ENCODE measurements at regions of chr22 and their contacts with region 1.

Region 1: DNA sequence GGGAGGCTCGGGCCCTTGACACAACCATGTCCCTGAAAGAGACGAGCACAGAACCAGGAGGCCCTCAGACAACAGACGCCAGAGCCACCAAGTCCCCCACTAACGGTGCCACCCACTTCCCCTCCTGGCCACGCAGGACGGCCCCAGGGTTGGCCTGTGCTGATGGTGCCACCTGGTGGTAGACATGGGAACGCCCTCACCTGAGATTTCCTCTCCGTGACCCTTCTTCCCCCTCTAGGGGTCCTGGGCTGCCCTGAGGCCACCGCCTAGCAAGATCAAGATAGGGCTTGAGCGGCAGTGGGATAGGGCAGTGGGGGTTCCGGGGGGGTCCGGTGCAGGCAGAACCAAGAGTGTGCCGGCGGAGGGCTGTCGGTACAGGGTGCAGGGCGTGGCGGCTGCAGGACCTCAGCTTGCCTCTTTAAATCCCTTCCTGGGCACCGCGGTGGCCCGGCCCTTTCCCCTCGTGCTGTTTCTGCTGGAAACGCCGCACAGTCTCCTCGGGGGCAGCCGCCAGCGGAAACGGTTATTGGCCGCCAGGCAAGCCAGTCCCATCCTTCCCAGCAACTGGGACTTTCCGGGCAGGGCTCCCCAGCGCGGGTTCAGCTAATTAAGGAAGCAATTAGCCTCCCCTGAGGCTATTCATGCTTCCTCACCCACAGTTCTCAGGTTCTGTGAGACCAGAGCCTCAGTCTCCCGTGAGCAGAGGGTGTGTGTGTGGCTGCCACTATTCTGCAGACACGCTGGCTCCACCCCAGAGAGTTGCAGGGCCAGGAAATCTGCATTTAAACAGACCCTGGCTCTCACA is 5.5 kb upstream of the NFAM1 start:
- DNase-seq: peak; percentile 58 to 73
- H3K4me3 ChIP-seq: peak overlapping the region; percentile 33 to 73 (median 50)
- H3K27ac ChIP-seq: peak overlapping the region; percentile 40 to 41
- H3K4me1 ChIP-seq: peaks cover 10 to 16% of the 10 kb centered on the region in 2 donors
- H3K27me3 ChIP-seq: no peaks in the 10 kb centered on the region
- CTCF ChIP-seq: peak; percentile 97 to 99 (median 99)
- POLR2A ChIP-seq: no peak

Region 2: DNA sequence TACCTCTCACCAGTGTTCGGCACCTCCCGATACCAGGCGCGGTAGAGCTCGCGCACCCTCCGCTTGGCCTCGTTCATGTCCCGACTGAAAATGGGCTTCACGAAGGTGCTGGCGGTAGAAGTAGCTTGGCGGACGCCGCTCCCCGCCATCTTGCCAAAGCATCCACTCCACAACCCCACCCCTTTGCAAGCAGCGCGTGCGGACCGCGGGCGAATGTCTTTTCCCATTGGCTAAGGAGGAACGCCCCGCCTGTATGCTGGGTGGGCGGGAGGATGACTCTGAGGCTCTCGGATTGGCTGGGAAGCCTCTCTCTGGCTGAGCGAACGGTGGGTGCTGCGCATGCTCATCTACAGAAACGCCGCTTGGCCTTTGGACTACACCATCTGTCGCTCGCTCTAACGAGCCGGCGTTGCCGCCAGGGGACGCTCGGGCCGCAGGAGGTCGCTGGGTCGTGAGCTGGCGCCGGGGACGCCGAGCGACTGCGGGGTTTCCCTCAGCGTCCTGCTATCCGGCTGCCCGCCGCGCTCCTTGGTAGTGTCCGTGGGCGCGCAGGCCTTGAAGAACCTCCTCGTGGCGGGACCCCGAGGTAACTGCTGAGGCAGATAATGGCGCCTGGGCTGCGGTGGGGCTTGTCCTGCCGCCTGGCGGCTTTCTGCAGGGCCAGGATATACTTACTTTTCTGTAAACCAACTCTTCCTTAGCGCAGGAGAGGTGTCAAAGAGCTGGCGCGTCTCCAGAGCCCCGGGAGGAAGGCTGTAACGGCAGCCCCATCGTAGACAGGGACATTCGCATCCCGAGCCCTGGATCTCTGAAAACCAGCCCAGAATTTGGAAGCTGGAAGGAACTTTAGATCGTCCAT is 346.9 kb before region 1 on chr22 and contains the start of gene NDUFA6:
- intact Hi-C with region 1: loop called (anchors 2 kb)
- DNase-seq: peak; percentile 98 to 99
- H3K4me3 ChIP-seq: peak within 1 kb of the TSS; percentile 70 to 95 (median 73)
- H3K27ac ChIP-seq: peak within 1 kb of the TSS; percentile 96 to 97
- H3K4me1 ChIP-seq: no peaks in the 10 kb centered on the region
- H3K27me3 ChIP-seq: no peaks in the 10 kb centered on the region
- CTCF ChIP-seq: peak; percentile 87 to 99 (median 95)
- POLR2A ChIP-seq: peak; percentile 75
- total RNA-seq, gene NDUFA6: 37.3 to 61.1 (median 45.2) TPM

Region 3: GRCh38 chr22:42169055-42169469 is 268.6 kb before region 1 on chr22:
- intact Hi-C with region 1: loop called (anchors 10 kb)
- DNase-seq: peak in 1 of 2 donors; percentile 43
- H3K4me3 ChIP-seq: no peak overlapping the region
- H3K27ac ChIP-seq: no peak overlapping the region
- H3K4me1 ChIP-seq: peaks cover 0 to 8% of the 10 kb centered on the region in 2 donors
- H3K27me3 ChIP-seq: no peaks in the 10 kb centered on the region
- CTCF ChIP-seq: peak; percentile 23 to 87 (median 82)
- POLR2A ChIP-seq: no peak

Region 4: DNA sequence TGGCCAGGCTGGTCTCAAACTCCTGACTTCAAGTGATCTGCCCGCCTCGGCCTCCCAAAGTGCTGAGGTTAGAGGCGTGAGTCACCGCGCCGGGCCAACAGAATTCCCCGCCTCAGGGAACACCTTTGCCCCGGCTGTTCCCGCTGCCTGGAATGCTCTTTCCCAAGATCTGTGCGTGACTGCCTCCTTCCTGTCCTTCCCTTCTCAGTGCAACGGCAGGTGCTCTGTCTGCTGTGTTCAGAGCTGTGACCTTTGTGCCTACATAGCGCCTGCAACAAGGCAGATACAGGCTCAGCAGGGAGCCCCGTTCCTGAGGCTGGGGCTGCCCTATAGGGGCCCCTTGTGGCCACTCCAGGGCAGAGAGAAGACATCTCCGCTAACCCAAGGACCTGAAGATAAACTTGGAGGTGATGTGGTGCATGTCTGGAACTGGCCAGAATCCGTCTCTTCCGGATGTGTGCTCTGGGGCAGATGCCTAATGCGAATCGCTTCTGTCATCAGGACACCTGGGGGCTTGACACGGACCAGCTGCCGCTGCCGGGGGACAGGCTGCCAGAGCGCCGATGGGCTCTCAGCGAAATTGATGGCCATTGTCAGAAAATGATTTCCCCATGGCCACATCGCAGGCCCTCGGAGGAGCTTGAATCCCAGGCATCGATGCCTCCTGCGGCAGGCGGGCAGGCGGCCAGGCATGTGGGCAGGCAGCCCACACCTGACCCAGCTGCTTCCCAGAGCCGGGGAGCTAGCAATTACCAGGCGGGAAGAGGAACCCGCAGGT is 123.7 kb before region 1 on chr22:
- intact Hi-C with region 1: no loop called
- DNase-seq: peak; percentile 63 to 65
- H3K4me3 ChIP-seq: peak overlapping the region in 2 of 3 donors; percentile 15 to 26
- H3K27ac ChIP-seq: peak overlapping the region; percentile 65 to 78
- H3K4me1 ChIP-seq: peaks cover 13 to 30% of the 10 kb centered on the region in 2 donors
- H3K27me3 ChIP-seq: no peaks in the 10 kb centered on the region
- CTCF ChIP-seq: peak in 2 of 3 donors; percentile 12 to 22
- POLR2A ChIP-seq: no peak

Region 5: GRCh38 chr22:42978453-42979103 is 540.9 kb after region 1 on chr22:
- intact Hi-C with region 1: no loop called
- DNase-seq: peak in 1 of 2 donors; percentile 87
- H3K4me3 ChIP-seq: peak overlapping the region in 1 of 3 donors; percentile 27
- H3K27ac ChIP-seq: peak overlapping the region; percentile 88 to 90
- H3K4me1 ChIP-seq: peaks cover 9 to 16% of the 10 kb centered on the region in 2 donors
- H3K27me3 ChIP-seq: no peaks in the 10 kb centered on the region
- CTCF ChIP-seq: no peak
- POLR2A ChIP-seq: no peak

Region 6: GRCh38 chr22:42994881-42995562 is 557.3 kb after region 1 on chr22:
- intact Hi-C with region 1: no loop called
- DNase-seq: peak in 1 of 2 donors; percentile 83
- H3K4me3 ChIP-seq: peak overlapping the region in 2 of 3 donors; percentile 25 to 54
- H3K27ac ChIP-seq: peak overlapping the region; percentile 91 to 95
- H3K4me1 ChIP-seq: peaks cover 18 to 35% of the 10 kb centered on the region in 2 donors
- H3K27me3 ChIP-seq: no peaks in the 10 kb centered on the region
- CTCF ChIP-seq: no peak
- POLR2A ChIP-seq: peak; percentile 13

Region 7: DNA sequence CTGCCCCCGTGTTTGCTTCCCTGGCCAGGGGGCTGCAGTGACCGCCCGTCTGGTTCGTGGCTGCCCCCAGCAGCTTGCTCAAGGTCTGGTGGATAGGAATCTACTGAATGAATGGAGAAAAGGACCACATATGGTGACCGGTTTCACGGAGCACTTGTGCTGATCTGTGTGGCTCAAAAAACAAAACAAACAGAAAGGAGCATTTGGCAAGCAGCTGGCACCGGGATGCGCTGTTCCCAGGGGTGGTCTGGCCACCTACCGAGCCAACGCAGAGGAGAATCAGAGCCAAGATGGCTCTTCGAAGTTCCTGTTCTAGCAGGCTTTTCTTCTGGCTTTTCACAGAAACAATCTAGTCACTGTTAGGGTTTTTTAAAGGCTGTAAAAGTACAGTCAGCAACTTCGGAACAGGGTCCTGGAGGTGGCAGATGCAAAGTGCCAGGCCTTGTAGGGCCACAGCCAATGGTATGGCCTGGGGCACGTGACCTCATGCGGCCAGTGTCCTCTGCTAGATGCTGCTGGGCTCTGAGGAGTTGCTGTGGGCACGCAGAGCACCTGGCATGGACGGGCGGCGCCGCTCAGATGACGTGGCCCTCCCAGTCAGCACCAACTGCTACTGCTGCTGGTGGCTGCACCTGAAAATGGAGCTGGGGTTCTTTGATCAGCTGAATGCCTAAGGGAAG is 604.6 kb after region 1 on chr22:
- intact Hi-C with region 1: no loop called
- DNase-seq: peak in 1 of 2 donors; percentile 36
- H3K4me3 ChIP-seq: no peak overlapping the region
- H3K27ac ChIP-seq: peak overlapping the region; percentile 4 to 54
- H3K4me1 ChIP-seq: no peaks in the 10 kb centered on the region
- H3K27me3 ChIP-seq: no peaks in the 10 kb centered on the region
- CTCF ChIP-seq: no peak
- POLR2A ChIP-seq: no peak

Measured in breast epithelium (tissue), 4 donors.